ENCODE measurements at regions of chr20 and their contacts with region 1.

Region 1: DNA sequence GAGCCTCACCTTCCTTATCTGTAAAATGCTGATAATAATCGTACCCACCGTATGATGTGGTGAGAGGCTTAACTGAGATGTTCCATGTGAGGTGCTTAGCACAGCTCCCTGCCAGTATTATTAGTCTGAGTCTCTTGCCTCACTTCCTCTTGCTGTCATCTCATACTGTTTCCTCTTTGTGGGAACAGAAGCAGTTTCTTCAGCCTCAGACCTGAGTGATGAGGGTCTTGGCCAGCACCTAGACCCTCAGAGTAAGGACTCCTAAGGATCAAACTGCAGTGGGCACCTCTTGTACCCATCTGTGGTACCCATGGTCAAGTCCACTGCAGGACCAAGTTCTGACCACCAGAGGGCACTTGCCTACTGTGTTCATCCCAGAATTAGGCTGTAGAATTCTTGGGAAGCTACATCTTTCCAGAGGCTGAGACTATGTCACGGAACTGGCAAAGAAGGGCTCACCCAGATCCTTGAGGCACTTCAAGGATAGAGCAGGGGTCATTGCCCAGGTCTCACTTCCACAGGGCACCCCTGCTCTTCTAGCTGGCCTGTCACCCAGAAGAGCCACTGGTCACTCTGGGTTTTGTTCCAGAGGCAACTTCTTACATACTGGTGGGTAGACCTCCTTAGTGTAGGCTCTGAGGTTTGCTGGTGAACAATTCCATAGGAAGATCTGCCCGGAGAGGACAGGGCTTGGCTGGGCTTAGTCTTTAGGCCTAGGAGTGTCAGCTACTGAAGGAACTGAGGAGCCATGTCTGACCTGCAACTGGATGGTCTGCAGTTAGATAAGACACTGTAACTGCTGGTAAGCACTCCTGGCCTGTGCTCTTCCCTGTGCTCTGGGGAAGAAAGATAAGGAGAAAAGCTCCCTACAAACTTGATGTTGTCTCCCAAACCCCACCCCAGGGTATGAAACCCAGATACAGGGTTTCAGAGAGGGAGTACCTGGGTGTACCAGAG is 20.6 kb upstream of the SGK2 start:
- DNase-seq: peak; percentile 72

Region 2: DNA sequence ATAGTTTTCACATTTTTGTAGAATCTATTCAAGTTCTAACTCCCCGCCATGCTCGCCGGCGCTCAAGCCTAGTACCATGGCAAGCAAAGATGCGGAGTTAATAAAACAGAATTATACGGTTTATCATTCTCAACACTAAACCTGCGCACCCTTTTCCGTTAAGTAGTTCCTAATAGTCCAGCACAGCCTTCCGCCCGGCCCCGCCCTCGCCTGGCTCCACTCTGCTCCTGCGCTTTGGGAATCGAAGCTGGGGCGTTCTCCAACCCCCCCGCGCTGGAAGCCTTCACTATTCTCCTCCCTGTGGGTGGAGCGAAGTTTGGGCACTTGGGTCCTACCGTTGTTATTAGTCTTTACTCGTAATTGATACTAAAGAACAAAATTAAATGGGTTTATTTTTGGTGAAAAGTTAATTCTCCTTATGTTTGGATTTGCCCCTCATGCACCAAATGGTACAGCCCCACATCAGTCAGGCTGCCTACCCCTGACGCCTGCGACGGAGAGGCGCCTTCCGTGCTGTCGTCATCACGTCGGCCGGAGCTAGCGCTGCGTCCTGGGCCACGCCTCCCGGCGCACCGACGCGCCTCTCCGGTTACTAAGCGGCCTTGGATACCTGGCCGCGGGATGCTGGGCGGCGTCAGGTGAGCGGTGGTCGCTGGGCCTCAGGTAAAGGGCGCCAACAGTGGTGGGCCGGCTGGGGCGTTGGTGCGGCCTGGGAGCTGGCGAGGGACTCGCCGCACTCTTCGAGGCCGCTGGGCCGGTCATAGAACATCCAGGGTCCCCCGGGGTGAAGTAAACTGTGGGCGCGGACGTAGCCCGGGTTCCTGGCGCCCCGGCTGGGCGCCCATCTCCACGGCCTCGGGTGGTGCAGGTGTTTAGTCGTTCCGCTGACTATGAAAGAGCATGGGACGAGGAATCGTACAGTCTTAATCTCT is 52.5 kb after region 1 on chr20 and contains the start of gene IFT52:
- intact Hi-C with region 1: loop called (anchors 5 kb)
- DNase-seq: peak; percentile 97
- total RNA-seq, gene IFT52: 10.2 TPM

Region 3: GRCh38 chr20:43691928-43692524 is 153.8 kb after region 1 on chr20:
- intact Hi-C with region 1: loop called (anchors 5 kb)
- DNase-seq: no peak